Tibial artery (tissue), 4 donors: ENCODE measurements at regions of chr1 and their contacts with region 1.

Region 1: GRCh38 chr1:167533851-167534300 is 15.5 kb upstream of the CD247 start:
- DNase-seq: peak in 1 of 2 donors; percentile 38
- H3K4me3 ChIP-seq: no peak overlapping the region
- H3K27ac ChIP-seq: no peak overlapping the region
- H3K4me1 ChIP-seq: peaks cover 0 to 3% (median 0%) of the 10 kb centered on the region in 4 donors
- H3K27me3 ChIP-seq: no peaks in the 10 kb centered on the region
- CTCF ChIP-seq: peak; percentile 75 to 87

Region 2: DNA sequence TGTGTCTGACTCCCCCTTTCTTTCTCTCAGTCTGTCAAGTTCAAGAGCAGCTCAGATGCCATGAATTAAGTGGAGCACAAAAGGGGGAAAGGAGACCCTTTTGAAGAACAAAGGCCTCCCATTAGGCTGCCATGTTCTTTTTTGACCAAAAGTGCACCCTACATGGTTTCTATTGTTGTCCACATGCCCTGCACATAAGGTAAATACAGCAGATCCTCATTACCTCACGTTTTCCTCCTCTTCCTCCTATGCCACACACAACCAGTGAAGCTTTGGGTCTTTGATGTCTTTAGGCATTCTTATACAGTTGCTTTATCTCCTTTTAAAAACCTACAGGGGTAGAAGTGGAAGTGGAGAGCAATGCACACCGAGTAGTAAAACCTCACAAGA is 265.5 kb before region 1 on chr1:
- intact Hi-C with region 1: loop called (anchors 5 kb)
- DNase-seq: no peak
- H3K4me3 ChIP-seq: no peak overlapping the region
- H3K27ac ChIP-seq: no peak overlapping the region
- H3K4me1 ChIP-seq: peaks cover 0 to 52% (median 4%) of the 10 kb centered on the region in 4 donors
- H3K27me3 ChIP-seq: no peaks in the 10 kb centered on the region
- CTCF ChIP-seq: no peak

Region 3: DNA sequence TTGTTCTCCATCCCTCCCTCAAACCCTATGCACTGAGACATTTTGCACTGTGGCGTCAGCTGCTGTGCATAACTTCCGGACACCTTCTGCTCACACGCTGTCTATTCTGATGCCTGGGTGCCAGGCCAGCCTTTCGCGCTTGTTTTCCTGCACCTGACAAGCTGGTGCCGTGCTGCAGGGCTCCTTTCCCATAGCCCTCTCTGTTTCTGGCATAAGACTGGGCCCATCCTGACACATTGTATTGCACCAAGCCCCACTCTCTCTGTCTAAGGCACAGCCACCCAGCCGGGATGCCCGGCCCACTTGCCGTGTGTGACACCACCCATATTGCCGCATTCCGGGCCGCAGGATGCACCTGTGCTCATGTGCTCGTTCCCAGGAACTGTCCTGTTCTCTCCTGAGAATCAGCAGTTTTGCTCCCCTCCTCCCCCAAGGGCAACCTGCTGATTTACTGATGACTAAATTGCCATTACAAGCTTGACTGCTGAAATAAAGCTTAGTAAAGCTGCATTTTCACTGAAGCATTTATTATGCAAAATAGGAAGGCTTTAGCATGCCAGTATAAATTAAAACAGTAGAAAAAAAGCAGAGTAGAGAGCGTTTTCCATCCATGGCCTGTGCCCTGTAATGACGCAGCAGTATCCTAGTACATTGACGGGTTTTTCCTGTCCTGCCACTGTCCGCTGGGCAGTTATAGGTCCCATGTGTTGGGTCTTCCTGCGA is 103.6 kb before region 1 on chr1:
- intact Hi-C with region 1: no loop called
- DNase-seq: no peak
- H3K4me3 ChIP-seq: no peak overlapping the region
- H3K27ac ChIP-seq: no peak overlapping the region
- H3K4me1 ChIP-seq: no peaks in the 10 kb centered on the region
- H3K27me3 ChIP-seq: no peaks in the 10 kb centered on the region
- CTCF ChIP-seq: no peak

Region 4: DNA sequence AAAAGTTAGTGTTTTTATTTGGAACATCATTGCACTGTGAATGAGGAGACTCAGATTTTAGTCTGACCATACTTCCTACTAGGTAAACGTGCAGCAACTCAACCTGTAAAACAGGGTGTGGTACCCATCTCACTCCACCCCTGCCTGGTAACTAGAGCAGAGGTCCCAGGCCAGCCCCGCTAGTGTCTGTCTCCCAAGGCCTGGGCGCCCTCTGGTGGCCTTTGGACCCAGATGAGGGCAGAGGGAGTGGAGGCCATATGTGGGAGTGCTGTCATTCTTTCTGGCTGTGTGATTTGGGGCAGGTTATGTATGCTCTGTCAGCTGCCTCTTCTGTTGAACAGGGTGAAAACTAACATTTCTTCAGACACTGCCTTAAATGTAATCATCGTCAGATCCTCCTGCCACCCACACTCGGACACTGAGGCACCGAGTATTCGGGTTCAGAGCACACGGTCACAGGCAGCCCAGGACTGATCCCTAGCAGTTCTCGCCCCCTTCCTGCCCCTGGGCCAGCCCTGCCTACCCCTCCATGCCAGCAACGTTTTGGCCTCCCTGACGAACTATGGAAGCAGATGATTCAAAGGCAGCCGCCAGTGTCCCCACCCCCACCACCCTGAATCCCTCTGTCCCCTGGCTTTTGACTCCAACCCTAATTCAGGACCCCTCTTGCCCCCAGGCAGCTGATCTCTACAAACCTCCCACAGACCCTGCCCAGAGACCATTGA is 91.6 kb before region 1 on chr1:
- intact Hi-C with region 1: loop called (anchors 10 kb)
- DNase-seq: peak; percentile 85 to 88
- H3K4me3 ChIP-seq: no peak overlapping the region
- H3K27ac ChIP-seq: no peak overlapping the region
- H3K4me1 ChIP-seq: peaks cover 0 to 11% (median 9%) of the 10 kb centered on the region in 4 donors
- H3K27me3 ChIP-seq: peaks cover 0 to 15% of the 10 kb centered on the region in 2 donors
- CTCF ChIP-seq: peak; percentile 78 to 85